ENCODE measurements at regions of chr6 and their contacts with region 1.

Region 1: GRCh38 chr6:3281631-3282475 is 23.1 kb downstream of the PSMG4 start:
- DNase-seq: no peak
- ATAC-seq: peak; percentile 6

Region 2: DNA sequence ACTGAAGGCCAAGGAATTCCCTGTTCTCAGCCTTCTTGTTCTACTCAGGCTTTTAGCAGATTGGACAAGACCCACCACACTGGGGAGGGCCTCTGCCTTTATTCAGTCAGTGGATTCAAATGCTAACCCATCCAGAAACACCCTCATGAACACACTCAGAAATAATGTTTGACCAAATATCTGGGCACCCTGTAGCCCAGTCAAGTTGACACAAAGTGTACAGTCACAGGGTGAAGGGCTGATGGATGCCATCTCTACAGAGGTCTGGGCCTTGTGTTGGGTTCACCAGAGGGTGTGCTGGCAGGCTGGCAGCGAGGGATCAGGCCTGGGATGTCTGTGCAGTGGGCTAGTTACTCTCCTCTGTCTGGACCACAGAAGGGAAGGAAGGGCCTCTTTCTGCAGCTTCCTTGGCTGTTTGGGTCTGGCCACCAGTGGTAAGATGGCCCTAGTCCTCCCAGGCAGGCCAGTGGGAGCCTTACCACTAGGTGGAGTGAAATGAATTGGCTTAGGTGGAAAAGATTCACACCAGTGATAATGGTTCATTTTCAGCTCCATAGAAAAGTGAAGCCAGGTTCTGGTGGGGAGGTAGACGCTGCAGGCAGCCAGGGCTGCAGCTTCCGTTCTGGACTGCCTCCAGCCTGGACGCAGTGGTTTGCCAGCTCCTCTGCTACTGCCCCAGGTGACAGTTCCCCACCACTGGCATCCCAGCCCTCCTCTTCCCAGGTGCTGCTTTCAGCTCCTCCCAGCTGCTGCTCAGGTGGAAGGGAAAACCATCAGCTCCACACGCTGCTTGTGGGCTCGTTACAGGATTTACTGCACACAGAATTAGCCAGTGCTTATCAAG is 133.7 kb before region 1 on chr6:
- intact Hi-C with region 1: no loop called
- DNase-seq: no peak
- ATAC-seq: no peak

Region 3: DNA sequence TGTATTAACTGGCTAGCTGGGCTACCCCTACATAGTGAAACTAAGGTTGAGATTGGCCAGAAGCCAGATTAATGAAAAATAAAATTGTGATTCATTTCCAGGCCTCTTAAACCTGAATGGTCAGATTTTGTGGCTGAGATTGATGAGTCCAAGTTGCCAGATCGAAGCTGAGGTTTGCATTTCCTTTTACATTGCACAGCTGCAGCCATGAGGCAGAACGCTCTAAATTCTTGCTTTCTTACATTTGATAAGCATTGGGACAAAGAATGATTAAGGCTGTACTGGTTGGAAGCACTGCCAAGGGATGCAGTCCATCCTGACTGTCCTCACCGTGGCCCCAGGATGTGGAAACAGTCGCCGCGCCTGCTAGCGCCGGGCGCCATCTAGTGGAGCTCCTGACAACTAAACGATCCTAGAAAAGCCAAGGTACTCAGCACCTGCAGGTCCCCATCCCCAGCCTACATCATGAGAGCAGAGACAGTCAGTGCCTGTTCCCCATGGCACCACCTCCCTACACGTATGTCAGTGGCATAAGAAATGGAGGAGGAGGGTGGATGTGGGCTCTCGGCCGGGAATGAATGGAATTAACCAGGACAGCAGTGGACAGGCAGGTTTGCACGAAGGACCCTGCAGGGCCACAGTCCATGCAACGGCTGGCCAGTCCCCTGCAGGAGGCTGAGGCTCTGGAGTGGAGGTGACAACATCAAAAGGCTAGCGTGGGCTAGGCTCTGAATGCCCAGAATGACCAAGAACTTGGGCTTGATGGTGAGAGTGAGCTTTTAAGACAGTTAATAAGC is 450.7 kb after region 1 on chr6:
- intact Hi-C with region 1: loop called (anchors 5 kb)
- DNase-seq: peak; percentile 80
- ATAC-seq: peak; percentile 79